ENCODE measurements at regions of chr15 and their contacts with region 1.

Region 1: DNA sequence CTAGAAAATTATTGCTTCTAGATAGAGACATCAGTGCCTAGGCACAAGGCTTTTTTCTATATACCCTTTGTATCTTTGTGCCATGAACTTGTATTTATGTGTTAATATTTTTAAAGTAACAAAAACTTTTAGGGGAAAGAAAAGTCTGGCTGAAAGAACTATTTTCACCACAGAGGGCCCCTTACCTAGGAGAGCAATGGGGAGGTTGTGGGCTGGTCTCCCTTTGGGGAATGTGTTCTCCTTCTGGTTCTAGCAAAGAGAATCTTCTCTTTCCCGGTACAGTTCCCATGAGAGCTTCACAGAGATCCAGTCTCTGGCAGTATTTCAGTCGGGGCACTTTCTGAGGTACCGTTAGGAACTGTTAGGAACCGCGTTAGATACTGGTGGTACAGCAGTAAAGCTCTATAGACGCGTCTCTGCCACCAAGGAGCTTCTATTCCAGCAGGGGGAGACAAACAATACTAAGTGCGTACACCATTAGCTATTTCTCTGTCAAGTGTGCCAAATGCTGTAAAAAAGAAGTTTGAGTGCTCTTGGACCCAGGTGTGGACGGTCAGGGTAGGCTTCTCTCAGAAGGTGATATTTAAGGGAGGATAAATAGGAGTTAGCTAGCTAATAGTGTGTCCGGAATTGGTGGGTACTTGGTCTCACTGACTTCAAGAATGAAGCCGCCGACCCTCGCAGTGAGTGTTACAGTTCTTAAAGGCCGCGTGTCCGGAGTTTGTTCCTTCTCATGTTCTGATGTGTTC is 4.6 kb upstream of the EPB42 start:
- DNase-seq: no peak
- ATAC-seq: peak; percentile 78
- H3K4me3 ChIP-seq: no peak overlapping the region
- H3K27ac ChIP-seq: no peak overlapping the region
- H3K4me1 ChIP-seq: no peaks in the 10 kb centered on the region
- H3K27me3 ChIP-seq: no peaks in the 10 kb centered on the region

Region 2: DNA sequence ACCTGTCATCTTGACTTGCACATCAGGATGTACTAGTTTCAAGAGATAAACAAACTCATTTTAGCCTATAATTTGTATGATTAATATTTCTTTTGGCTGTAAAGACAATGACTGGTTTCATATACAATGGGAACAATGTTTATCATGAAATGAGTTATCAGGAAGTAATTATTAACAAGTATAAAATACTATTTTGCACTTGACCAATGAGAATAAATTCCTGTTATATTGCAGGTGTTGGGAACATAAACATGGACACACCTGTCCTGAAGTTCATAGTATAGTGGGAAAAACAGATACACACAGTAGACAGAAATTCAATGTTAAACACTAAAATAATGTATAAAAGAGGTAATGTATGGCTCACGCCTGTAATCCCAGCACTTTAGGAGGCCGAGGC is 176.4 kb before region 1 on chr15:
- intact Hi-C with region 1: no loop called
- DNase-seq: no peak
- ATAC-seq: no peak
- H3K4me3 ChIP-seq: no peak overlapping the region
- H3K27ac ChIP-seq: no peak overlapping the region
- H3K4me1 ChIP-seq: no peaks in the 10 kb centered on the region
- H3K27me3 ChIP-seq: no peaks in the 10 kb centered on the region

Region 3: GRCh38 chr15:43285609-43286037 is 60.2 kb after region 1 on chr15:
- intact Hi-C with region 1: loop called (anchors 1 to 2 kb)
- DNase-seq: no peak
- ATAC-seq: peak; percentile 81
- H3K4me3 ChIP-seq: no peak overlapping the region
- H3K27ac ChIP-seq: no peak overlapping the region
- H3K4me1 ChIP-seq: no peaks in the 10 kb centered on the region
- H3K27me3 ChIP-seq: no peaks in the 10 kb centered on the region